ENCODE measurements at regions of chr1 and their contacts with region 1.

Region 1: DNA sequence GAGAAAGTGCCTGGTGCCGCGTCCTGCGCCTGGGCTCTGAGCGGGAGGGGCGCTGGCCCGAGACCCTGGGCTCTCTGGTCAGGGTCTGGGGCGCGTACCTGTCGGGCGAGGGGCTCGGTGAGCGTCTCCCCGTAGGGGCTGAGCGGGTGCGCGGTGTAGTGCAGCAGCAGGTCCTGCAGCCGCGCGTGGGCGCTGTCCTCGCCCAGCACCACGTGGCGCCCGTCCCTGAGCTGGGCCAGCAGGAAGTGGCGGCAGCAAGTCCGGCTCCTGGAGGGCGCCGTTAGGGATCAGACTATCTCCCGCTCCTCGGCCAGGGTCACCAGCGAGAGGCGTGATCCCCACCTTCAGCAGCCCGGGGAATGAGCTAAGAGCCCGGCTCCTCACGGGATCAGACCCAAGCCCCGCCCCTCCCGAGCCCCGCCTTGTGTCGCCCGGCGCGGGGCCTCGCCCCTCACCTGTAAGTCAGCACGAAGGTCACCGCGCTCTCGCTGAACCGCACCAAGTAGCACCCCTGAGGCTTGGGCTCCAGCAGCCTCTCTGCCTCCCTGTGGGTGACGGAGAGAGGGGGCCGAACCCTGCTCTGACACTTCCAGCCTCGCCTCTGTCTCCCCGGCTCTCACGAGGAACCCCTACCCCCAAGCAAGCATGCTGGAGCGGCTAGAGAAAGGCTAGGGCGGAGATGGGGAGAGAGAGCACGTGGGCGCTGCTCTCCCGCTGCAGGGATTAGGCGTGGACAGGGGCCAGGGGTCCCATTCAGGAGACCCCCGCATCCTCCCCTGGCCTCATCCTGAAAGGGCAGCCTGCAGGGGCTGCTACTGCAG is 2.7 kb downstream of the SH2D2A start:
- DNase-seq: peak; percentile 81 to 85
- H3K4me3 ChIP-seq: peak overlapping the region; percentile 55
- H3K4me3 Mint-ChIP-seq: peak overlapping the region; percentile 74
- H3K27ac Mint-ChIP-seq: peak overlapping the region; percentile 53
- H3K4me1 ChIP-seq: peaks cover 11% of the 10 kb centered on the region; the same call in 1 of the 2 replicates
- H3K4me1 Mint-ChIP-seq: no peaks in the 10 kb centered on the region
- H3K27me3 ChIP-seq: no peaks in the 10 kb centered on the region
- H3K27me3 Mint-ChIP-seq: no peaks in the 10 kb centered on the region
- CTCF ChIP-seq: peak; percentile 50 to 87

Region 2: DNA sequence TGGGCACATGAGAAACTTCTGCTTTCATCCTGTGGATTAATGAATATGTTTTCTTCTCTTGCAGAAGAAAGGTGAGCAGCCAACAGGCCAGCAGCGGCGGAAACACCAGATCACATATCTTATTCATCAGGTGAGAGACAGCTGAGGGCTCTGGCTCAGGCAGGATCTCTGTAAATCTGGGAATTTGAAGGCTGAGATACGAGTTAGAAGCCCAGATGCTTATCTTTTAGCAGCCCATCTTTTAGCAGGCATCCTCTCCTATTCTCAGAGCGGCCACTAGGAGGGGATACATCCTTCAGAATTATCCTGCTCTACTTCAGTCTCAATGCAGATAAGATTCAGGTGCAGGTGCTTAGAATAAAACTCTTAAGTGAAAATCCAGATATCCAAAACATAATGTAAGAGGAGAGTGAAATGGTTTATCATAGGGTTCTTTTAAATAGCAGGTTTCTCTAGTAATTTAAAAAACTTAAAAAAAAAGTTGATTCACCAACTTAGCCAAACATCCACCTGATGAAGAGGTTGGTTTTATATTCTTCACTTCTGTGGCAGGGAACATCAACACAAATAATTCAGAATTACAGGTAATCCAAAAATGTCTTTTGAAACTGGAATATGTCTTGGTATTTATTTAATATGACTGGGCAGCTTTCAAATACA is 16.6 kb before region 1 on chr1:
- CTCF ChIA-PET with region 1: interaction called, 6 read pairs
- POLR2A ChIA-PET with region 1: no interaction called
- intact Hi-C with region 1: loop called (anchors 2 kb)
- DNase-seq: peak; percentile 53 to 68
- H3K4me3 ChIP-seq: no peak overlapping the region
- H3K4me3 Mint-ChIP-seq: no peak overlapping the region
- H3K27ac Mint-ChIP-seq: no peak overlapping the region
- H3K4me1 ChIP-seq: no peaks in the 10 kb centered on the region
- H3K4me1 Mint-ChIP-seq: no peaks in the 10 kb centered on the region
- H3K27me3 ChIP-seq: no peaks in the 10 kb centered on the region
- H3K27me3 Mint-ChIP-seq: no peaks in the 10 kb centered on the region
- CTCF ChIP-seq: peak; percentile 72 to 81

Measured in Caco-2 (cell line).